IMR-90 (cell line): ENCODE measurements at regions of chr12 and their contacts with region 1.

Region 1: GRCh38 chr12:49945394-49946080 is 5.0 kb upstream of the AQP2 start:
- DNase-seq: peak; percentile 79
- ATAC-seq: peak; percentile 100
- H3K4me3 ChIP-seq: no peak overlapping the region
- H3K27ac ChIP-seq: no peak overlapping the region
- H3K4me1 ChIP-seq: no peaks in the 10 kb centered on the region; the same call in 1 of the 2 replicates
- H3K27me3 ChIP-seq: peaks cover 12% of the 10 kb centered on the region; the same call in 1 of the 2 replicates
- CTCF ChIP-seq: peak; percentile 90
- POLR2A ChIP-seq: no peak
- RAD21 ChIP-seq: peak; percentile 55

Region 2: DNA sequence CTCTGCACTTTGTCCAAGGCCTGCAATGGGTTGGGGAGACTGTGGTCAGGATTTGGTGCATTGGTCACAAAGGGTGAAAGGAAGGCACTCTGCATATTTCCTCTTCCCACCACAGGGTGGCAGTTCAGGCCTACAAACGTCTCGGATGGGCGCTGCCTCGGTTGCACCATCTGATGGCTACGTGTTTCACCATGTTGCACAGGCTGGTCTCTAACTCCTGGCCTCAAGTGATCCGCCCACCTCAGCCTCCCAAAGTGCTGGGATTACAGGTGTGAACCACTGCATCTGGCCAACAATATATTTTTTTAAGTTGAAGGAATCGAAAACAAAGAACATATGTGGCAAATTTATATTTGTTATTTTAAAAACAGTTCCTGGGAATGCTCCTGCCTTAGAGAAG is 169.1 kb before region 1 on chr12:
- CTCF ChIA-PET with region 1: no interaction called
- POLR2A ChIA-PET with region 1: no interaction called
- dilution Hi-C with region 1: no loop called
- in situ Hi-C with region 1: no loop called
- intact Hi-C with region 1: loop called (anchors 2 kb)
- DNase-seq: peak; percentile 79
- ATAC-seq: peak; percentile 97
- H3K4me3 ChIP-seq: no peak overlapping the region
- H3K27ac ChIP-seq: no peak overlapping the region
- H3K4me1 ChIP-seq: no peaks in the 10 kb centered on the region
- H3K27me3 ChIP-seq: peaks cover 4% of the 10 kb centered on the region; the same call in 1 of the 2 replicates
- CTCF ChIP-seq: peak; percentile 86
- POLR2A ChIP-seq: no peak
- RAD21 ChIP-seq: peak; percentile 93

Region 3: DNA sequence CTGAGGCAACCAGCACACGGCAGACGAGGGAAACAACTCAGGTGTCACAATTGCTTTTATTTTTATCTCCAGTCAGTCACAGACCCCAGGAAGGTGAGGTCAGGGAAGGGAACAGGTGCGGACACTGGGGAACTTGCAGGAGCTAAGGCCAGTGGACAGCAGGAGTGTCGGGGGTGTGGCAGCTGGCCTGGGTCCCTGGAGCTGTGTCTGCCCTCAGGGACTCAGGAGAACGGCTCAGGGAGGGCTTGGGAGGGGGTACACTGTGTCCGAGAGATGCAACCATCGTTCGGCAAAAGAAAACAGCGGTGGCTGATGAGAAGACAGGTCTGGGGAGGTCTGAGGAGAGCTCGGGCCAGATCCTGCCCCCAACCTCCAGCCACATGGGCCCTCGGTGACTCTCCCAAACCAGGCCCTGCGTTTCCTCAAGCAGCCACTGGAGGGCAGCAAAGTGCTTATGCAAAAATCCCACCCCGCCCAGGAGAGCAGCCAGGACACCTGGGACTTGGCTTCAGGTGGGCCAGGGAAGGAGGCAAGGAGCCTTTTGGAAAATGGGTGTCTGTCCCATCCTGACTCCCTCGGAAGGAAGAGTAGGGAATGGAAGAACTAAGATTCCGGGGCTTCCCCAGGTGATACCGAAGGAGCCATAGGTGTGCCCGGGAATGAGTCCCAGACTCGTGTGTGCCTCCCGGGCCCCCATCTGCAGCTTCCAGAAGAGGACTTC is 78.5 kb before region 1 on chr12:
- CTCF ChIA-PET with region 1: interaction called, 7 read pairs
- POLR2A ChIA-PET with region 1: no interaction called
- dilution Hi-C with region 1: no loop called
- in situ Hi-C with region 1: loop called (anchors 5 kb)
- intact Hi-C with region 1: loop called (anchors 1 kb)
- DNase-seq: peak; percentile 46
- ATAC-seq: peak; percentile 25; the same call in 1 of the 2 replicates
- H3K4me3 ChIP-seq: no peak overlapping the region
- H3K27ac ChIP-seq: no peak overlapping the region
- H3K4me1 ChIP-seq: peaks cover 23% of the 10 kb centered on the region
- H3K27me3 ChIP-seq: peaks cover 22% of the 10 kb centered on the region
- CTCF ChIP-seq: peak; percentile 83
- POLR2A ChIP-seq: no peak
- RAD21 ChIP-seq: peak; percentile 86

Region 4: GRCh38 chr12:49928476-49928875 is 17.1 kb before region 1 on chr12:
- CTCF ChIA-PET with region 1: interaction called, 10 read pairs
- POLR2A ChIA-PET with region 1: no interaction called
- dilution Hi-C with region 1: no loop called
- in situ Hi-C with region 1: no loop called
- intact Hi-C with region 1: no loop called
- DNase-seq: no peak
- ATAC-seq: no peak
- H3K4me3 ChIP-seq: no peak overlapping the region
- H3K27ac ChIP-seq: no peak overlapping the region
- H3K4me1 ChIP-seq: no peaks in the 10 kb centered on the region
- H3K27me3 ChIP-seq: no peaks in the 10 kb centered on the region; the same call in 1 of the 2 replicates
- CTCF ChIP-seq: no peak
- POLR2A ChIP-seq: no peak
- RAD21 ChIP-seq: no peak

Region 5: GRCh38 chr12:50111693-50112455 is 166.3 kb after region 1 on chr12 and contains the start of gene COX14:
- CTCF ChIA-PET with region 1: no interaction called
- POLR2A ChIA-PET with region 1: no interaction called
- dilution Hi-C with region 1: no loop called
- in situ Hi-C with region 1: no loop called
- intact Hi-C with region 1: no loop called
- DNase-seq: peak; percentile 99
- ATAC-seq: peak; percentile 94
- H3K4me3 ChIP-seq: peak within 1 kb of the TSS; percentile 66
- H3K27ac ChIP-seq: peak within 1 kb of the TSS; percentile 52
- H3K4me1 ChIP-seq: peaks cover 13% of the 10 kb centered on the region
- H3K27me3 ChIP-seq: no peaks in the 10 kb centered on the region
- CTCF ChIP-seq: peak; percentile 94
- POLR2A ChIP-seq: peak; percentile 89
- RAD21 ChIP-seq: peak; percentile 40; the same call in 1 of the 2 replicates
- total RNA-seq, gene COX14: 30.0 and 30.8 TPM in 2 replicates